Endothelial cell of umbilical vein (primary cell): ENCODE measurements at regions of chr14 and their contacts with region 1.

Region 1: DNA sequence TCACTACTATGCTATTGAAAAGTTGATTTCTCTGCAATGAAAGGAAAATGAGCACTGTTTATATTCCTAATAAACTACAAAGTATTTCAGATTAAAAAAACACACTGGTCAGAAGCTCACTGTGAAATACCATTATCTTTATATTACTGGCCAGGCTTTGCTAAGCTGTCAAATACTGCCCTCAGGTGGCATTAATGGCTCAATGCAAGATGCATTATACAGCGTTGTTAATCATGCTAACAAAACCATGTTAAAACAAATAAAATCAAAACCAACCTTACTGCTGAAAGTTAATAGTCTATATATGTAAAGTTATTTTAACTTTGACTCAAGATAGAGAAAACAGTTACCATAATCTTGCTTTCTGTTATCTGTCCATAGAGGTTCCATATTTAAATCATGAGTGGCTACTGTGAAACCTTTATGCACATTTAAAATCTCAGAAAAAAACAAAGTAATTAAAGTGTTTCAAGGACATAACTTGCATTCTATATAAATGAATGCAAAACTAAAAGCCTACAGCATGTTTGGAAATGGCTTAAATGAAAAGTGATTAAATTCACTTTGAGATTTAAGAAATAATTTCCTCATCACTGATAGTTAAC is 121.7 kb downstream of the RALGAPA1 start:
- DNase-seq: peak; percentile 62
- H3K4me3 ChIP-seq: no peak overlapping the region
- H3K27ac ChIP-seq: no peak overlapping the region
- H3K4me1 ChIP-seq: peaks cover 16% of the 10 kb centered on the region
- H3K27me3 ChIP-seq: no peaks in the 10 kb centered on the region
- CTCF ChIP-seq: peak; percentile 60 to 67
- POLR2A ChIP-seq: no peak

Region 2: DNA sequence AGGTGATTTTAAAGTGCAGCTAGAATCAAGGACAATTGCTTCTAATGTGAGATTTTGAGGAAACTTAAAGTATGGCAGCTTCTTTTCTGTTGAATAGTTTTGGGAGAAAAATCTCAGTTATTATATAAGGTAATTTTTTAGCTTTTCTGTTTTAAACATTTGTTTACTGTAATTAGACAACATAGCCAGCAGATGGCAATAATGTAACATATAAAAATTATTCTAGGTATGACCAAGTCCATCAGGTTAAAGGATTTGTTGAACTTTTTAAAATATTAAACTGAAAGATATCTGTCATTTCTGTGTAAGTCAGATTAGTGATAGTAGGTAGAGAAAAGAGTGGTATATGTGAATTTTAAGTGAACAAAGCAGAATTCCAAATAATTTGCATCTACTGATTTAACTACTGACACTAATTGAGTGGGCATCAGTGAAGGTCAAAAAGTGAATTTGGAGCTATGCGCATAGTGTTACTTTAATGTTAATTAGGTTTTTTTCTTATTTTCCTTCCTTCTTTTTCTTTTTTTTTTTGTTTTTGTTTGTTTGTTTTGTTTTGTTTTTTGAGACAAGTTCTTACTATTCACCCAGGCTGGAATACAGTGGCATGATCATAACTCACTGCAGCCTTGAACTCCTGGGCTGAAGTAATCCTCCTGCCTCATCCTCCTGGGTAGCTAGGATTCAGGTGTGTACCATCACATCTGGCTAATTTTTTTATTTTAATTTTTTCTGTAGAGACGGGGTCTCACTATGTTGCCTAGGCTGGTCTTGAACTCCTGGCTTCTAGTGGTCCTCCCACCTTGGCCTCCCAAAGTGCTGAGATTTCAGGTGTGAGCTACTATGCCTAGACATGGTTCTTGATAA is 546.5 kb before region 1 on chr14:
- CTCF ChIA-PET with region 1: interaction called, 33 read pairs
- POLR2A ChIA-PET with region 1: no interaction called
- dilution Hi-C with region 1: no loop called
- intact Hi-C with region 1: no loop called
- DNase-seq: peak; percentile 51
- H3K4me3 ChIP-seq: no peak overlapping the region
- H3K27ac ChIP-seq: no peak overlapping the region
- H3K4me1 ChIP-seq: no peaks in the 10 kb centered on the region
- H3K27me3 ChIP-seq: no peaks in the 10 kb centered on the region
- CTCF ChIP-seq: no peak
- POLR2A ChIP-seq: no peak

Region 3: DNA sequence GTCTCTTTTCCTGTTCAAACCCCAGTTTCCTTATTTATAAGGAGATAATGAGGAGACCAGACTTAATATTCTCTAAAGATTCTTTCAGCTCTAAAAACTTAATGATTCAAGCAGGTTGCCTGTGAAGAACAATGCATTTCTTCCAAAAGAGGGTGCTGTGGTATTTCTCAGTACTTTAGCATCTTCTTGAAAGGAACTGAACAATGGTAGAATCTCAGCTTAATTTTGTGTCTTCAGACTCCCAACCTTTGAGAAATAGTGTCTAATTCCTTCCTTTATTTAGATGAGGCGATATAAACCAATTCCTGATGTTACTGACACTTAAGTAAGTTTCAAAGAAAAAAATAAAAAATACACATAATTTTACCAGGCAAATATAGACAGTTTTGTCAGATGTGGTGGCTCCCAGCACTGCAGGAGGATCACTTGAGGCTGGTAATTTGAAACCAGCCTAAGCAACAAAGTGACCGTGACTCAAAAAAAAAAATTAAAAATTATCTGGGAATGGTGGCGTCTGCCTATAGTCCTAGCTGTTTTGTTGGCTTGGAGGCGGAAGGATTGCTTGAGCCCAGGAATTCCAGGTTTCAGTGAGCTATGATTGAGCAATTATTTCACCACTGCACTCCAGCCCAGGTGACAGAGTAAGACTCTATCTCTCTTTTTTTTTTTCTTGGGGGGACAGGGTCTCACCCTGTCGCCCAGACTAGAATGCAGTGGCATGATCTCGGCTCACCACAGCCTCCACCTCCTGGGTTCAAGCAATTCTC is 472.1 kb before region 1 on chr14:
- CTCF ChIA-PET with region 1: interaction called, 9 read pairs
- POLR2A ChIA-PET with region 1: no interaction called
- dilution Hi-C with region 1: no loop called
- intact Hi-C with region 1: loop called (anchors 10 kb)
- DNase-seq: peak; percentile 62
- H3K4me3 ChIP-seq: no peak overlapping the region
- H3K27ac ChIP-seq: peak overlapping the region; percentile 41
- H3K4me1 ChIP-seq: peaks cover 20% of the 10 kb centered on the region
- H3K27me3 ChIP-seq: no peaks in the 10 kb centered on the region
- CTCF ChIP-seq: no peak
- POLR2A ChIP-seq: no peak

Region 4: DNA sequence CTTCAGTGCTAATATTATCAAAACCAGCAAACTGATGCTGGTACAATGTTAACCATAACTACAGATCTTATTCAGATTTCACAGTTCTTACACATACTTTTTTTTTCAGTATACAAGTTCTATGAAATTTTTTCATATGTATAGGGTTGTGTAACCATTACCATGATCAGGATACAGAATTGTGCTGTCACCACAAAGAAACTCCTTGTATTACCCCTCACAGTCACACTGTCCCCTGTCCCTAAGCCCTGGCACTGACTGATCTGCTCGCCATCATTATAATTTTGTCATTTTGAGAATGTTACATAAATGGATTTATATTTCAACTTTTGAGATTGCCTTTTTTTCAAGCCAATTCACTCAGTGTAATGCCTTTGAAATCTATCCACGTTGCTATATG is 261.6 kb before region 1 on chr14:
- CTCF ChIA-PET with region 1: interaction called, 20 read pairs
- POLR2A ChIA-PET with region 1: no interaction called
- dilution Hi-C with region 1: loop called (anchors 25 kb)
- intact Hi-C with region 1: loop called (anchors 2 kb)
- DNase-seq: no peak
- H3K4me3 ChIP-seq: no peak overlapping the region
- H3K27ac ChIP-seq: no peak overlapping the region
- H3K4me1 ChIP-seq: peaks cover 8% of the 10 kb centered on the region
- H3K27me3 ChIP-seq: no peaks in the 10 kb centered on the region
- CTCF ChIP-seq: no peak
- POLR2A ChIP-seq: no peak

Region 5: DNA sequence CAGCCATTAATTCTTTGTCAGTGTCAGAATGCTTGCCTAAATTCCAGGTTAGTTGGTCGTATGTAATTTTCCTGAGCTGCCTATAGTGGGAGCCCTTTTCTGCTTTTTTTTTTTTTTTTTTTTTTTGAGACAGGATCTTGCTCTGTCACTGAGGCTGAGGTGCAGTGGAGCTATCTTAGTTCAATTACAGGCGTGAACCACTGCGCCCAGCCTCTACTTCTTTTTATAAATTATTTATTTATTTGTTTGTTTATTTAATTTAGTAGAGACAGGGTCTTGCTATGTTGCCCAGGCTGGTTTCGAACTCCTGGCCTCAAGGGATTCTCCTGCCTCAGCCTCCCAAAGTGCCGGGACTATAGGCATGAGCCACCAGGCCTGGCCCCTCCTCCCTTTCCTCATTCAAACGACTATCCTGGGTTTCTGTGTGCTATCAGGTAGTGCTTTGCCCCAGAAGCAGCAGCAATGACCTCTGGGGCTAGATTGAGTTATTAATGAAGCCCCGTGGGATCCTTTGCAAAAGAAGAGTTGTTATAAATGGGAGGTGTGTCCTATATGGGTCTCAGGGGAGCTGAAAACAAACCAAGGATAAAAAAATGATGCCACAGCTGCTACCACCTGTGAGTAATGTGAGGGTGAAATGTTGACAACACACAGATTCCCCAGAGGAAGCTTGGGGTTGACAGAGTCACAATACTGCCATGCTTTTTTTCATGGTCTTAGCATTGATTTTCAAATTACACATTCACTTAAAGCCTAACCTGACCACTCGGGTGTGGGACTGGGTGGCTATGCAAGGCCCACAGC is 248.3 kb before region 1 on chr14:
- CTCF ChIA-PET with region 1: interaction called, 55 read pairs
- POLR2A ChIA-PET with region 1: no interaction called
- dilution Hi-C with region 1: loop called (anchors 25 kb)
- intact Hi-C with region 1: loop called (anchors 2 kb)
- DNase-seq: no peak
- H3K4me3 ChIP-seq: no peak overlapping the region
- H3K27ac ChIP-seq: no peak overlapping the region
- H3K4me1 ChIP-seq: no peaks in the 10 kb centered on the region
- H3K27me3 ChIP-seq: peaks cover 0 to 2% of the 10 kb centered on the region in 2 experiments
- CTCF ChIP-seq: peak; percentile 47 to 53
- POLR2A ChIP-seq: no peak

Region 6: GRCh38 chr14:35533357-35534207 is 153.9 kb before region 1 on chr14 and contains the start of gene INSM2:
- CTCF ChIA-PET with region 1: interaction called, 28 read pairs
- POLR2A ChIA-PET with region 1: no interaction called
- dilution Hi-C with region 1: no loop called
- intact Hi-C with region 1: loop called (anchors 1 kb)
- DNase-seq: peak; percentile 60
- H3K4me3 ChIP-seq: peak within 1 kb of the TSS; percentile 48 to 80 (median 63)
- H3K27ac ChIP-seq: no peak within 1 kb of the TSS
- H3K4me1 ChIP-seq: peaks cover 17% of the 10 kb centered on the region
- H3K27me3 ChIP-seq: peaks cover 41 to 61% of the 10 kb centered on the region in 2 experiments
- CTCF ChIP-seq: no peak
- POLR2A ChIP-seq: no peak
- total RNA-seq, gene INSM2: not detected in 2 replicates

Region 7: GRCh38 chr14:35814371-35815005 is 127.1 kb after region 1 on chr14:
- CTCF ChIA-PET with region 1: interaction called, 21 read pairs
- POLR2A ChIA-PET with region 1: no interaction called
- dilution Hi-C with region 1: no loop called
- intact Hi-C with region 1: loop called (anchors 10 kb)
- DNase-seq: peak; percentile 66
- H3K4me3 ChIP-seq: no peak overlapping the region
- H3K27ac ChIP-seq: no peak overlapping the region
- H3K4me1 ChIP-seq: no peaks in the 10 kb centered on the region
- H3K27me3 ChIP-seq: peaks cover 2 to 10% of the 10 kb centered on the region in 2 experiments
- CTCF ChIP-seq: peak; percentile 64 to 75
- POLR2A ChIP-seq: no peak